ENCODE measurements at regions of chr3 and their contacts with region 1.

Region 1: DNA sequence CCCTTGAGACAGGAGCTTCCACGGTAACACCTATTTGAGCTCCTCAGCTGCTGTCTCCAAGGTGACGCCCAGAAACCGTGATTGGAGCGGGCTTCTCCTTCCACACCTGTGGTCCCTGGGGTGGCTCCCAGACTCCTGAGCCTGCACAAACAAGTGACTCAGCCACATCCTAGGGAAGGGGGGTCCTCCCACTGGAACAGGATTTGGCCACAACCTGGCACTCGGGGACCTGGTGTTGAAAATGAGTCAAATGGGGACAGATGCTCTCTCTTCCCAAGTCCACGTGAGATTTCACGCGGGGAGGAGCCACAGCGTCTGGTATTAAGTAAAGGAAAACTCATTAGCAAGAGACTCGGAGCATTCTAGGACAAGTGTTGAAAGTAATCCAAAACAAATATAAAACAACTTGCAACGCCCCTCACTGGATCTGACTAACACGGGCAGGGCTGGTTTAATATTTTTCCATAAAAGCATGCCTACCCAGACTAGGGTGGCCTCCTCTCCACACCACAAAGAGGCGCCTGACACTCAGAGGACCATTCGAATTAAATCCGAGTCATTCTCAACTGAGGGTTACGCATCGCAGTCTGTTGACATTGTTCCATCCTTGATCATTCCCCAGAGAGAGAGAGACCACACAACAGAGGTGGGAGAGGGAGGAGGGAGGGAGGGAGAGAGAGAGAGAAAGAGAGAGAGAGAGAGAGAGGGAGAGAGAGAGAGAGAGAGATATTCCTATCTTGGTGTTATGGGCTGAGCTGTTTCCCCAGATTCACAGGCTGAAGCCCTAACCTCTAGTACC is 74.4 kb downstream of the MGLL start:
- DNase-seq: peak; percentile 79
- H3K4me3 ChIP-seq: no peak overlapping the region
- H3K27ac ChIP-seq: peak overlapping the region; percentile 44
- H3K4me1 ChIP-seq: peaks cover 26% of the 10 kb centered on the region
- H3K27me3 ChIP-seq: no peaks in the 10 kb centered on the region
- CTCF ChIP-seq: no peak
- POLR2A ChIP-seq: no peak

Region 2: GRCh38 chr3:127768346-127769008 is 20.6 kb after region 1 on chr3:
- CTCF ChIA-PET with region 1: interaction called, 5 read pairs
- POLR2A ChIA-PET with region 1: no interaction called
- dilution Hi-C with region 1: no loop called
- intact Hi-C with region 1: loop called (anchors 2 kb)
- DNase-seq: peak; percentile 70
- H3K4me3 ChIP-seq: no peak overlapping the region
- H3K27ac ChIP-seq: peak overlapping the region; percentile 81
- H3K4me1 ChIP-seq: peaks cover 25% of the 10 kb centered on the region
- H3K27me3 ChIP-seq: no peaks in the 10 kb centered on the region
- CTCF ChIP-seq: no peak
- POLR2A ChIP-seq: no peak

Measured in endothelial cell of umbilical vein (primary cell).